ENCODE measurements at regions of chr16 and their contacts with region 1.

Region 1: DNA sequence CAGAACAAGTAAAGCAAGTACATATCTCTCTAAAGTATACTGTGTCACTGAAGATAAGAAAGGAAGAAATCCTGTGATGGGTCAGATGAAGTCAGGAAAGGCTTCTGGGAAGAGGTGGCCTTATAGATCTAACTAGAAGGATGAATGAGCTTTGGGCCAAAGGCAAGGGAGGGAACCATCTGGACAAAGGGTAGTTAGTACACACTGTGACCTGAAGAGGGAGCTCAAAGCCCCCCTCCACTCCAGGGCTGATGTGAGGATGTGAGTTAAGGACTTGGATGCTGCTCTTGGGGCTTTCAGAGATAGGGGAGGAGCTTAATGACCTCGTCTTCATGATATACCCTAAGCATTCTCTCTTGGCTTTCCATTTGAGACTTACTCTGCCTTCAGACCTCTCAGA is 185.3 kb upstream of the CACNG3 start:
- DNase-seq: peak; percentile 83
- H3K4me3 ChIP-seq: no peak overlapping the region
- H3K27ac ChIP-seq: no peak overlapping the region
- H3K4me1 ChIP-seq: peaks cover 39% of the 10 kb centered on the region
- CTCF ChIP-seq: peak; percentile 91

Region 2: DNA sequence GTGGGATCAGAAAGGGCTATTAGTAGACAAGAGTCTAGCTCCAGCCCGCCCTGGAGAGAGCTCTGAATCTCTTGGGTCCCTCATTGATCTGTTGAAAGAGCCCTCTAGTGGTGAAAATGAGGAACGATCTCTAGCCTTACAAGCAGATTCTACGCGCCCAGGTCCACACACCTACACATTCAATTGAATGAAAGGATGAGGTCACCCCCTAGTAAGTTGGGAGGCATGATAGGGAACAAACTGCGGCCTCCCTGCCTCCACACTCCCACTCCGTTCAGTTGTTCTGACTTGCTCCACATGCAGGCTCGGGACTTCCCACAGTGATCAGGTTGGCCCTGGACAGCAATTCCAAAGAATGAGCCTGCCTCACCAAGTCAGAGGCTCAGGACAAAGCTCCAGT is 182.3 kb after region 1 on chr16:
- CTCF ChIA-PET with region 1: interaction called, 25 read pairs
- POLR2A ChIA-PET with region 1: interaction called, 4 read pairs
- intact Hi-C with region 1: loop called (anchors 1 kb)
- DNase-seq: peak; percentile 78
- H3K4me3 ChIP-seq: no peak overlapping the region
- H3K27ac ChIP-seq: no peak overlapping the region
- H3K4me1 ChIP-seq: peaks cover 35% of the 10 kb centered on the region
- CTCF ChIP-seq: peak; percentile 86

Region 3: DNA sequence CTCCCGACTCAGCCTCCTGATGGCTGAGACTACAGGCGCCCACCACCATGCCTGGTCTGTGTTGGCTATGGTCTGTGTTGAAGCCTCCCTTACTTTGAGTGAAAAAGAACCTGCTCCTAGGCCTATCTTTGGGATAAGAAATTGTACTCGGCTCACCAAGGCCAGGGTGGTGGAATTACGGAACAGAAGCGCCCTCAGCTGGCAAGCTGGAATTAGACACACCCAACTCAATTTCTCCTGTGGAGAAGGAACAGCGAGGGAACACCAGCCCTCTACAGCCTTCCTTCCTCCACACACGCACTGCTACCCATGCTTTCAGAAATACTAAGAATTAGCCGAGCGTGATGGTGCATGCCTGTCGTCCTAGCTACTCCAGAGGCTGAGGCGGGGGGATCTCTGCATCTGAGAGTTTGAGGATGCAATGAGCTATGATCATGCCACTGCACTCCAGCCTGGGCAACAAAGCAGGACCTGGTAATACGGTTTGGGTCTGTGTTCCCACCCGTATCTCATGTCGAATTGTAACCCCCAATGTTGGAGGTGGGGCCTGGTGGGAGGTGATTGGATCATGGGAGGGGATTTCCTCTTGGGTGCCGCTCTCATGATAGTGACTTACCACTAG is 428.5 kb after region 1 on chr16:
- CTCF ChIA-PET with region 1: interaction called, 5 read pairs
- POLR2A ChIA-PET with region 1: no interaction called
- intact Hi-C with region 1: loop called (anchors 1 kb)
- DNase-seq: peak; percentile 31
- H3K4me3 ChIP-seq: no peak overlapping the region
- H3K27ac ChIP-seq: no peak overlapping the region
- H3K4me1 ChIP-seq: peaks cover 4% of the 10 kb centered on the region
- CTCF ChIP-seq: peak; percentile 76